Activated CD8-positive, alpha-beta T cell treated with anti-CD3 and anti-CD28 coated beads for 36 hours (primary cell): ENCODE measurements at regions of chr11 and their contacts with region 1.

Region 1: DNA sequence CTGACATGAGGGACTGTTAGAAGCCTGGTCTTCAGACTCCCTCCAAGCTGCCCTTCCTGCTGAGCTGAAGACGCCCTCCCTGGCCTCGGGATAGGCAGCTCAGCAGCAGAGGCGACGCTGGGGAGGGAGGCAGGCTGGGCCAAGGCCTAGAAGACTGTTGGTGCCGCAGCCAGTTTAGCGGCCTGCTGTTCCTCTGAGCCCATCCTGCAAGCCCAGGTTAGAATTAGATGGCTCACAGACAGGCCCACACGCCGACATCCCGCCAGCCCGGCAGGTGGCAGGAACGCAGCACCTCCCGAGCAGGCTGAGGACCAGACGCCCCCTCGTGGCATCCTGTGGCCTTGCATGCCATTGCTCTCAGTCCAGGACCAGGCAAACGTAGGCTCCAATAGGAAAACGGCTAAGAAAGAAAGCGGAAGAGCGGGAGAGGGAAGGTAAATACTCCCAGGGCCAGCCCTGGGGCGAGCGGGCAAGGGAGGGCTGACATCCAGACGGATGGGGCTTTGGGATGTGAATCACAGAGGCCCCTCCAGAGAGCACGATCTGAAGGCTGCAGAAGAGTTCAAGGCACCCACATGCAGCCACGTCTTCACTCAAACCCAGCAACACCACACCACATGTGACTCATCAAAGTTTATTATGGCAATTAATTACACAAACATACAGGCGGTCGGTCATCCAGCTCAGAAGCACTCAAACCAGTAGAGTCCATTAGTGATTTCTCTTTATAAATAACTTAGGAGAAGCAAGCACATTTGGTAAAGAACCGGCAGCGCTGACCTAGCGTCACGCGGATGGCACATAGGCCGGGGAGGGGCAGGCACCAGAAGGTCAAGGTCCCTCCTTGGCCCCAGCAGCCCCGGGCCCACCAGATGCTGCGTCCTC is 27.6 kb downstream of the CD5 start:
- DNase-seq: peak; percentile 95
- ATAC-seq: peak; percentile 92
- H3K4me3 Mint-ChIP-seq: peak overlapping the region; percentile 29
- H3K27ac Mint-ChIP-seq: peak overlapping the region; percentile 11
- H3K4me1 Mint-ChIP-seq: peaks cover 15% of the 10 kb centered on the region
- H3K27me3 Mint-ChIP-seq: no peaks in the 10 kb centered on the region
- CTCF ChIP-seq: peak; percentile 100

Region 2: DNA sequence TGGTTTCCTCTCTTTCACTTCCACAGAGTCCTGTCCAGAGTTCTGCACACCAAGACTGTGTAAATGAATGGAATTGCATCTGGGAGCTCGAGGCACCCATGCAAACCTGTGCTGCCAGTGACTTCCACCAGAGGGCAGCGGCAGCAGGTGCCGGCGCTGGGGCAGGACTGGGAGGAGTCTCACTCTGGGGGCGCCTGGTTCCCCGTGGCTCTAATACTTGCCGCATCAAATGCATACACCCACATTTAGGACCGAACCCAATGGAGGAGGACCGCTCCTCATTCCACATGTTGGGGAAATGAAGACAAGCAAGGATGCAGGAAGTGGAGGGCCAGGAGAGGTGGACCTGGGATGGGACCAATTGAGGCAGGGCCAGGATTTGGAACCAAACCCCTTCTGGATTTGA is 159.5 kb before region 1 on chr11:
- CTCF ChIA-PET with region 1: interaction called, 3 read pairs
- POLR2A ChIA-PET with region 1: interaction called, 4 read pairs
- intact Hi-C with region 1: loop called (anchors 1 kb)
- DNase-seq: peak; percentile 90
- ATAC-seq: peak; percentile 74
- H3K4me3 Mint-ChIP-seq: peak overlapping the region; percentile 83
- H3K27ac Mint-ChIP-seq: peak overlapping the region; percentile 63
- H3K4me1 Mint-ChIP-seq: peaks cover 16% of the 10 kb centered on the region
- H3K27me3 Mint-ChIP-seq: no peaks in the 10 kb centered on the region
- CTCF ChIP-seq: peak; percentile 95

Region 3: GRCh38 chr11:61083601-61084147 is 46.2 kb before region 1 on chr11:
- CTCF ChIA-PET with region 1: interaction called, 24 read pairs
- POLR2A ChIA-PET with region 1: interaction called, 5 read pairs
- intact Hi-C with region 1: no loop called
- DNase-seq: peak; percentile 83
- ATAC-seq: peak; percentile 70
- H3K4me3 Mint-ChIP-seq: peak overlapping the region; percentile 78
- H3K27ac Mint-ChIP-seq: peak overlapping the region; percentile 88
- H3K4me1 Mint-ChIP-seq: peaks cover 65% of the 10 kb centered on the region
- H3K27me3 Mint-ChIP-seq: no peaks in the 10 kb centered on the region
- CTCF ChIP-seq: no peak

Region 4: DNA sequence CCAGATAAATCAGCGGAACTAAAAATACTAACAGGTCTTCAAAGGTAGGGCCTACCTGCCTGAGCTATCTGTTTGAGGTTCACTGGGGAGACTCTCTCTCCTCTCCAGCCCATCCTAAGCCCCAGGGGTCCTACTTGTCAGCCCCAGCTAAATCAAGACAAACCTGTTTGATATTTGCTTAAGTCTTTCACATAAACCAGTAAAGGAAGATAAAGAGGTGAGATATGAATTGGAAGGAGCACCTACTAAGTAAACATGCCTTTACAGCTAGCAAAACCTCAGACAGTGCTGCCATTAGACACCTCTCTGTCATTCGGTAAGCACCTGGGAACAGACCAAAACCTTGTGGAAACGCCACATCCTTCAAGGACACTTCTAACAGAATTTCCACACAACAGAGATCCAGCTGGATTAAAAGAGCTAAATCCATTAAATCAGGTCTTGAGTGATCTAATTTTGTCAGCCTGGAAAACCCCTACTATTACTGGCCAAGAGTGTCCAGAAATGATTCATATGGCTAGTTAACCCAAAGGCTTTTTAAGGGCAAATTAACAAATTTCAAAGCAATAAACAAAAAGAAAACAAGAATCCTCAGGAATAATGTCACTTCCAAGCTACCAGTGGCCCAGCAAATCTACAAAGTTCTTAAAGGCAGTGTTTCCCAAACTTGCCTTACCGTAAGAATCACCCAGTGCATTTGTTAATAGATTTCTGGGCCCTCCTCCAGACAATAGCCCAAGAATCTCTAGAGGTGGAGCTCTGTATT is 28.9 kb after region 1 on chr11:
- CTCF ChIA-PET with region 1: interaction called, 24 read pairs
- POLR2A ChIA-PET with region 1: interaction called, 7 read pairs
- intact Hi-C with region 1: no loop called
- DNase-seq: no peak
- ATAC-seq: no peak
- H3K4me3 Mint-ChIP-seq: no peak overlapping the region
- H3K27ac Mint-ChIP-seq: peak overlapping the region; percentile 23
- H3K4me1 Mint-ChIP-seq: peaks cover 43% of the 10 kb centered on the region
- H3K27me3 Mint-ChIP-seq: no peaks in the 10 kb centered on the region
- CTCF ChIP-seq: no peak